ENCODE measurements at regions of chr17 and their contacts with region 1.

Region 1: GRCh38 chr17:73820686-73821448 is 176.6 kb upstream of the SDK2 start:
- DNase-seq: peak; percentile 57 to 77
- H3K4me3 ChIP-seq: peak overlapping the region in 1 of 4 experiments; percentile 23; a peak in 1 of 8 replicates
- H3K27ac ChIP-seq: no peak overlapping the region
- H3K4me1 ChIP-seq: peaks cover 0 to 6% (median 2%) of the 10 kb centered on the region in 4 experiments; a peak in 4 of 7 replicates
- H3K27me3 ChIP-seq: peaks cover 0 to 28% (median 17%) of the 10 kb centered on the region in 4 experiments; a peak in 4 of 7 replicates
- CTCF ChIP-seq: peak; percentile 54 to 73 (median 66)
- EP300 ChIP-seq: no peak
- POLR2A ChIP-seq: peak; percentile 89 to 96
- RAD21 ChIP-seq: peak; percentile 53 to 63

Region 2: DNA sequence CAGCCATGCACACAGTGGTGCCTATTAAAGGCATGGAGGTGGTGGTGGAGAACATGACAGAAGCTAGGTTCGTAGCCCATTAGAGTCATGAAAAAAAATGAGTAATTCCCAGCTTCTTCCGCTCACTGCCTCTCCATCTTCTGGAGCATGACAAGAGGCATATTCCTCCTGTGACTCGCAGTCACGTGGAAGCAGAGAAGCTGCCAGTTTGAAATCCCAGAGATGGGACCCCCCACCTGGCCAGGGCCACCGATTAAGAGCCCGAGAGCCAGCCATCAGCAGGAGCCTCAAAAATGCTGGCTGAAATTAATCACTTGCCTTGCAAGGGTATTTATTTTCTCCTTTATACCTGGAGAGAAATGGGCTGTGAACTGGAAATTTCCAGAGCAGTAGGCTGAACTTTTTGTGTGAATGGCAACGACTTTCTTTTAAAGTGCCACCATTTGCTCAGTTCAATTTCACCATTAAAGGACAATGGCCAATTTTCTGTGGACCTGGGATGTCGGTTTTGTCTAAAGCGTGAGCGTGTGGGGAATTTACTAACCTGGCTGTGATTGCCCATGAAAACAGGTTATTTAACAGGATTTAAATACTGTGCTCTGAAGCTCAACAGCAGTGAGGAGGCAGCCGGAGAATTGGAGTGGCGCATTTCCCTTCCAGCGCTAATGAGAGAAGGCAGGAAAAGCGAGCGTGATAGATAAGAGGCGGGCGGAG is 13.1 kb after region 1 on chr17:
- CTCF ChIA-PET with region 1: interaction called, 15 read pairs
- POLR2A ChIA-PET with region 1: interaction called, 7 read pairs
- DNase-seq: no peak
- H3K4me3 ChIP-seq: no peak overlapping the region
- H3K27ac ChIP-seq: no peak overlapping the region
- H3K4me1 ChIP-seq: no peaks in the 10 kb centered on the region
- H3K27me3 ChIP-seq: peaks cover 0 to 6% (median 2%) of the 10 kb centered on the region in 4 experiments; a peak in 4 of 7 replicates
- CTCF ChIP-seq: no peak
- EP300 ChIP-seq: no peak
- POLR2A ChIP-seq: no peak
- RAD21 ChIP-seq: no peak

Region 3: GRCh38 chr17:73841431-73842060 is 20.7 kb after region 1 on chr17:
- CTCF ChIA-PET with region 1: interaction called, 12 read pairs
- POLR2A ChIA-PET with region 1: interaction called, 3 read pairs
- DNase-seq: peak in 1 of 2 experiments; percentile 59
- H3K4me3 ChIP-seq: no peak overlapping the region
- H3K27ac ChIP-seq: no peak overlapping the region
- H3K4me1 ChIP-seq: no peaks in the 10 kb centered on the region
- H3K27me3 ChIP-seq: no peaks in the 10 kb centered on the region
- CTCF ChIP-seq: peak; percentile 91 to 96 (median 93)
- EP300 ChIP-seq: no peak
- POLR2A ChIP-seq: no peak
- RAD21 ChIP-seq: peak; percentile 97

Region 4: DNA sequence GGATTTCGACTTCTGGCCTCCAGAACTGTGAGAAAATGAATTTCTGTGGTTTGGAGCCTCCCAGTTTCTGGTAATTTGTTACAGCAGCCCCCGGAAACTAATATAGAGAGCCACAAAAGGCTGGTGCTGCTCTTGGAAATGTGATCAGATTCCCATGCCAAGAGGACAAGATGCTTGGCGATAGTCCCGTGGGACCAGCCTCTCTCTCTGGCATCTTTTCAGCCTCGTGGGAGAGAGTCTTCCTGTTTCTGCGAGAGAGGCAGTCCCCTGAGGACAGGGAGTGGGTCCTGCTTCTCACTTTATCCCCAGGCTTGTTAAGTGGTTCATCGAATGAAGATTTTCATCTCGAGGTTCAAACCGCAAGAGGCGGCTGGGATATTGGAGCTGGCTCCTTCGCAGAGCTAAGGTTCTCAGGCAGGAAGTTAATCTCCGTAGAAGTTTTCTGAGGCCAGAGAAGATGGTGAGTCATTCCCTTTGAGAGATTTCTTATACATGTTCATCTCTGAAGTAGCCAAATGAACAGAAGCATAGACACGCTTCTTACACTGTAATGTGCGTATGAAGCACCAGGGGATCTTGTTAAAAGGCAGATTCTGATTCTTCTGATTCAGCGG is 35.0 kb after region 1 on chr17:
- CTCF ChIA-PET with region 1: no interaction called
- POLR2A ChIA-PET with region 1: no interaction called
- DNase-seq: no peak
- H3K4me3 ChIP-seq: no peak overlapping the region
- H3K27ac ChIP-seq: no peak overlapping the region
- H3K4me1 ChIP-seq: peaks cover 0 to 3% (median under 1%) of the 10 kb centered on the region in 4 experiments; a peak in 3 of 7 replicates
- H3K27me3 ChIP-seq: no peaks in the 10 kb centered on the region
- CTCF ChIP-seq: no peak
- EP300 ChIP-seq: no peak
- POLR2A ChIP-seq: no peak
- RAD21 ChIP-seq: no peak

Measured in H1 (cell line).